Naive thymus-derived CD4-positive, alpha-beta T cell (primary cell): ENCODE measurements at regions of chr14 and their contacts with region 1.

Region 1: GRCh38 chr14:50003213-50004031 is 110.5 kb downstream of the ARF6 start:
- DNase-seq: peak; percentile 63 to 84 (median 69)
- ATAC-seq: peak; percentile 62
- H3K4me3 ChIP-seq: peak overlapping the region; percentile 64
- H3K4me3 Mint-ChIP-seq: peak overlapping the region; percentile 74 to 95 (median 90)
- H3K27ac ChIP-seq: peak overlapping the region; percentile 90
- H3K27ac Mint-ChIP-seq: peak overlapping the region; percentile 90 to 99 (median 98)
- H3K4me1 ChIP-seq: peaks cover 47 to 48% of the 10 kb centered on the region in 2 donors
- H3K4me1 Mint-ChIP-seq: peaks cover 40 to 71% (median 63%) of the 10 kb centered on the region in 7 donors
- H3K27me3 ChIP-seq: no peaks in the 10 kb centered on the region
- H3K27me3 Mint-ChIP-seq: no peaks in the 10 kb centered on the region

Region 2: DNA sequence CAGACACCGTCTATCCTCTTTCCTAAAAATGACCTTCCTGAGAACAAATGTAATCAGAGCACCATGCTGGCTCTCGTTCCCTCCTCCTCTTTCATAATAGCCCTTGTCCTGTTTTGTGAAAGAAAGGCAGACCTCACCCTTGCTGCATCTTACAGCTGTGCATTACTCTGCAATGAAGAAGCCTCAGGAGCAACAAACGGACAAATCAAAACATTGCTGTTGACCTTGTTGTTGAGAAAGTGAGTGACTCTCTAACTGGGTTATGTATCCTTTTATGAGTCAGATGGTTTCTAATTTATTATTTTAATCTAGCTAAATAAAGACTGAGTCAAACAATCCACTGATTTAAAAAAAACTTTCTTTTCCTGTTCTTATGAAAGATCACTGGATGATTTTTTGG is 598.1 kb before region 1 on chr14:
- CTCF ChIA-PET with region 1: no interaction called
- POLR2A ChIA-PET with region 1: no interaction called
- intact Hi-C with region 1: no loop called
- DNase-seq: no peak
- ATAC-seq: no peak
- H3K4me3 ChIP-seq: no peak overlapping the region
- H3K4me3 Mint-ChIP-seq: no peak overlapping the region
- H3K27ac ChIP-seq: no peak overlapping the region
- H3K27ac Mint-ChIP-seq: no peak overlapping the region
- H3K4me1 ChIP-seq: no peaks in the 10 kb centered on the region
- H3K4me1 Mint-ChIP-seq: no peaks in the 10 kb centered on the region
- H3K27me3 ChIP-seq: no peaks in the 10 kb centered on the region
- H3K27me3 Mint-ChIP-seq: peaks cover 0 to 23% (median 10%) of the 10 kb centered on the region in 5 donors

Region 3: DNA sequence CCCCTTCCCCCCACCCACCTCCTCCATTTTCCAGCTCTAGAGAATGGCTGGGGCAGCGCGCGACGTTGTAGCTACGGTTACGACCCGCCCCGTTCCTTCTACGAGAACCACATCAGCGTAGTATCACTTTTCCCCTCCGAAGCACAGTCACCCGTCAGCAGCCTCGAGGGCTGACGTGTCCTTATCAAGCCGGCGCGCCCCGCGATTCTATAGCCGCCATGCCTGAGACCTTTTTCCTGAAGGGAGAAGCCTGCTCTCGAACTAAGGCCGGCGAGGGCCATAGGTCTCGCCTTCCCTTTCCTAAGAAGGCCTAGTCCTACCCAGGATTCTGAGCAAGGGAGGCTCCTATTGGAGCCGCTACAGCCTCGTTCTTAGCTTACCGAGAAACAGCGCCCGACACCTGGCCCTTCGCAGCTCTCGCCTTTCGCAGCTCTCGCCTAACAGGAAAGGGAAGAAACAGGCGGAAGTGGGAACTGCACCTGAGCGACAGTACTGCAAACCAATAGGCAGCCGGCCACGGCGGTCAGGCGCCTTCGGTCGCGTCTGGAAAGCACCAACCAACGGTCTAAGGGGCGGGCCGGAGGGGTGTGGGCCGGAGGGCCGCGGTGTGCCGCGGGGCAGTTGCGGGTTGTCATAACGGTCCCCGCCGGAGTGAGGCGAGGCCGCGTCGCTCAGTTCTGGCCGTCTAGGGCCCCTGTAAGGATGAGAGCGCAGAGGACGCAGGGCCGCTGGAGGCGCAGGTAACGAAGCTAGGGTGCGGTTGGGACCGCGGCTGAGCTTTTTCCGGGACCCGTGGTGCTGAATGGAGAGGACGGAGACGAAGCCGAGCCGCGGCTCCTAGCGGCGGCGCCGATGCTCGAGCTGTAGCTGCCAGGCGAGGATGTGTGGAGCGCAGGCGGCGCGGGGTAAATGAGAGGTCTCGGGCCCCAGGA is 383.0 kb before region 1 on chr14 and contains the starts of genes MGAT2 and RPL36AL:
- CTCF ChIA-PET with region 1: no interaction called
- POLR2A ChIA-PET with region 1: no interaction called
- intact Hi-C with region 1: loop called in 1 of 2 experiments (anchors 5 kb)
- DNase-seq: peak; percentile 89 to 95 (median 94)
- ATAC-seq: peak; percentile 92
- H3K4me3 ChIP-seq: peak within 1 kb of the TSS; percentile 98
- H3K4me3 Mint-ChIP-seq: peak within 1 kb of the TSS; percentile 94 to 99 (median 98)
- H3K27ac ChIP-seq: peak within 1 kb of the TSS; percentile 97
- H3K27ac Mint-ChIP-seq: peak within 1 kb of the TSS; percentile 95 to 100 (median 99)
- H3K4me1 ChIP-seq: peaks cover 40 to 42% of the 10 kb centered on the region in 2 donors
- H3K4me1 Mint-ChIP-seq: peaks cover 36 to 75% (median 56%) of the 10 kb centered on the region in 7 donors
- H3K27me3 ChIP-seq: no peaks in the 10 kb centered on the region
- H3K27me3 Mint-ChIP-seq: no peaks in the 10 kb centered on the region
- total RNA-seq, gene MGAT2: 16.8 to 69.3 (median 35.1) TPM
- total RNA-seq, gene RPL36AL: 177 to 429 (median 281) TPM

Region 4: DNA sequence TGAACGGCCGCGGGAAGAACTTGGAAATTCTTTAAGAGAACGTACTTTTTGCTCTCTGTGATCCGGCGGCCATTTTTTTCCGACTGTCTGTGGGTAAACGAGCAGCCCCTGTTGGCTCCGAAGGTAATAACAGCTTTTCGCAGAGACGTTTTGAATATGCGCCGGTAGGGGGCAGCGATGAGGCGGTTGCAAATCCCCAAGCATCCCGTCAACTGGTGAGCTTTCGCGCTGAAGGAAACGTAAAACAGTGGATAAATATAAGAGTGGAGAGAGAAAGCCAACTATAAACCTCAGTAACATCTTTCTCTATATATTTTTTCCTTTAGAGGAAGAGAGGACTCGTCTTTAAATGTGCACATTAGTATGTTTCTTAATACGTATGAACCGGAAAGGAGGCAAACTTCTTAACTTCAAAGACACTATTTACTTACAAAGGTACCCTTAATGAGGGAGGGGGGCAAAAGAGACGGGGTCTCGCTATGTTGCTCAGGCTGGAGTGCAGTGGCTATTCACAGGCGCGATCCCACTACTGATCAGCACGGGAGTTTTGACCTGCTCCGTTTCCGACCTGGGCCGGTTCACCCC is 141.2 kb before region 1 on chr14:
- CTCF ChIA-PET with region 1: interaction called, 40 read pairs
- POLR2A ChIA-PET with region 1: interaction called, 120 read pairs
- intact Hi-C with region 1: loop called (anchors 1 kb)
- DNase-seq: peak; percentile 78 to 94 (median 89)
- ATAC-seq: peak; percentile 73
- H3K4me3 ChIP-seq: peak overlapping the region; percentile 94
- H3K4me3 Mint-ChIP-seq: no peak overlapping the region
- H3K27ac ChIP-seq: peak overlapping the region; percentile 95
- H3K27ac Mint-ChIP-seq: no peak overlapping the region
- H3K4me1 ChIP-seq: peaks cover 19 to 25% of the 10 kb centered on the region in 2 donors
- H3K4me1 Mint-ChIP-seq: peaks cover 0 to 33% (median 7%) of the 10 kb centered on the region in 7 donors
- H3K27me3 ChIP-seq: no peaks in the 10 kb centered on the region
- H3K27me3 Mint-ChIP-seq: peaks cover 0 to 9% (median 0%) of the 10 kb centered on the region in 5 donors

Region 5: GRCh38 chr14:49940808-49941421 is 62.5 kb before region 1 on chr14:
- CTCF ChIA-PET with region 1: interaction called, 5 read pairs
- POLR2A ChIA-PET with region 1: interaction called, 43 read pairs
- intact Hi-C with region 1: loop called (anchors 1 kb)
- DNase-seq: peak in 6 of 9 donors; percentile 25 to 63 (median 46)
- ATAC-seq: peak; percentile 64
- H3K4me3 ChIP-seq: peak overlapping the region; percentile 24
- H3K4me3 Mint-ChIP-seq: peak overlapping the region in 9 of 10 donors; percentile 18 to 72 (median 66)
- H3K27ac ChIP-seq: peak overlapping the region; percentile 39
- H3K27ac Mint-ChIP-seq: peak overlapping the region; percentile 27 to 90 (median 85)
- H3K4me1 ChIP-seq: peaks cover 31 to 36% of the 10 kb centered on the region in 2 donors
- H3K4me1 Mint-ChIP-seq: peaks cover 20 to 71% (median 59%) of the 10 kb centered on the region in 7 donors
- H3K27me3 ChIP-seq: no peaks in the 10 kb centered on the region
- H3K27me3 Mint-ChIP-seq: no peaks in the 10 kb centered on the region

Region 6: DNA sequence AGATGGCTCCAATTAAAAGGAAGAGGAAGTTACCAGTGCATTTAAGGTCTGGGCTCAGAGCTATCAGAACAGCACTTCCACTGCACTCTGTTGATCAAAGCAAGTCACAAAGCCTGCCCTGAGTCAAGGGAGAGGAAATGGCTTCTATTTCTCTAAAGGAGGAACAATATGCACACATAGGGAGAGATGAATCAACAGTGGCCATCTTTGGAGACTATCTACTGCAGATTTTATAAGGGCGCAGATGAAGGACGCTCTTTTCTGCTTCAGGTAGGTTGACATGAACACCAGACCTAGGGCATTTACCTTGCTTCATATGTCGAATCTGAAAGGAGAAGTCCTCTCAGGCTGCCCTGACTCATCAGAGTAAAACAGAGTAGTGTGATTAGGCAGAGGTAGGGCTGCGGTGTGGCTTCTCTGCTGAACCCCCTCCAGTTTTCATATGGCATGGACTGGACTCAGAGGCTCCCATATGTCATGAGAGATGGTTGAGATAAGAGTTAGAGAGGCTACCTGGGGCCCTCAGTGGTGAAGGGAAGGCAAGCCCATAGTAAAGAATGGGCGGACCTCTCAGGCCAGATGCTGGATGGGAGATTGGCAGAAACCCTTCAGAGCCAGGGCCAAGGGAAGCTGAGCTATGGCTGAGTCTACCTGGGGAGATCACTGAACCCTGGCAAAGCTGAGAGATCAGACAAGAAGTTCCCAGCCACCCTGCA is 26.1 kb before region 1 on chr14:
- CTCF ChIA-PET with region 1: interaction called, 39 read pairs
- POLR2A ChIA-PET with region 1: interaction called, 188 read pairs
- intact Hi-C with region 1: loop called in 1 of 2 experiments (anchors 1 kb)
- DNase-seq: peak in 8 of 9 donors; percentile 33 to 77 (median 64)
- ATAC-seq: peak; percentile 87
- H3K4me3 ChIP-seq: peak overlapping the region; percentile 58
- H3K4me3 Mint-ChIP-seq: peak overlapping the region; percentile 64 to 85 (median 80)
- H3K27ac ChIP-seq: peak overlapping the region; percentile 71
- H3K27ac Mint-ChIP-seq: peak overlapping the region; percentile 88 to 99 (median 97)
- H3K4me1 ChIP-seq: peaks cover 44 to 76% of the 10 kb centered on the region in 2 donors
- H3K4me1 Mint-ChIP-seq: peaks cover 58 to 99% (median 85%) of the 10 kb centered on the region in 7 donors
- H3K27me3 ChIP-seq: no peaks in the 10 kb centered on the region
- H3K27me3 Mint-ChIP-seq: no peaks in the 10 kb centered on the region

Region 7: GRCh38 chr14:50045039-50045711 is 41.8 kb after region 1 on chr14:
- CTCF ChIA-PET with region 1: interaction called, 3 read pairs
- POLR2A ChIA-PET with region 1: interaction called, 46 read pairs
- intact Hi-C with region 1: loop called (anchors 1 kb)
- DNase-seq: peak in 8 of 9 donors; percentile 39 to 74 (median 62)
- ATAC-seq: peak; percentile 86
- H3K4me3 ChIP-seq: no peak overlapping the region
- H3K4me3 Mint-ChIP-seq: peak overlapping the region; percentile 50 to 89 (median 74)
- H3K27ac ChIP-seq: peak overlapping the region; percentile 69
- H3K27ac Mint-ChIP-seq: peak overlapping the region; percentile 88 to 99 (median 96)
- H3K4me1 ChIP-seq: peaks cover 51 to 63% of the 10 kb centered on the region in 2 donors
- H3K4me1 Mint-ChIP-seq: peaks cover 49 to 83% (median 71%) of the 10 kb centered on the region in 7 donors
- H3K27me3 ChIP-seq: no peaks in the 10 kb centered on the region
- H3K27me3 Mint-ChIP-seq: no peaks in the 10 kb centered on the region

Region 8: DNA sequence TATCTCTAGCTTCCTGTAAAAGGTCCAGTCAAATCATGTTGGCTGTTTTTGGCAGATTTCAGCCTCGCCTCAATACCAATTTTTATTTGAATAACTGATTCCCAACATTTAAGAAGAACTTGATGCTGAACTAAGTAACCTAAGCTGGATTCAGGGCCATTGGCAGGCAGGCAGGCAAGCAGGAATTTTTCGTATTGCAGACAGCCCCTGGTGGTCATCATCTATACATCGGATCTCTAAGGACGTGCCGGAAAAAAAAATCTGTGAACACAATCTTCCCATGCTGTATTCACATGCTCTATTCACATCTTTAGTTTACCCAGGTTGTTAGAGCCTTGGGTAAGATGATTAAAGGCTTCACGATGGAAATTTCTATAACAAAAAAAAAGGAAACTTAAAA is 105.9 kb after region 1 on chr14:
- CTCF ChIA-PET with region 1: no interaction called
- POLR2A ChIA-PET with region 1: interaction called, 20 read pairs
- intact Hi-C with region 1: loop called (anchors 1 kb)
- DNase-seq: no peak
- ATAC-seq: no peak
- H3K4me3 ChIP-seq: no peak overlapping the region
- H3K4me3 Mint-ChIP-seq: no peak overlapping the region
- H3K27ac ChIP-seq: no peak overlapping the region
- H3K27ac Mint-ChIP-seq: no peak overlapping the region
- H3K4me1 ChIP-seq: peaks cover under 1 to 4% of the 10 kb centered on the region in 2 donors
- H3K4me1 Mint-ChIP-seq: peaks cover 0 to 21% (median 16%) of the 10 kb centered on the region in 7 donors
- H3K27me3 ChIP-seq: no peaks in the 10 kb centered on the region
- H3K27me3 Mint-ChIP-seq: no peaks in the 10 kb centered on the region